ENCODE measurements at regions of chr20 and their contacts with region 1.

Region 1: DNA sequence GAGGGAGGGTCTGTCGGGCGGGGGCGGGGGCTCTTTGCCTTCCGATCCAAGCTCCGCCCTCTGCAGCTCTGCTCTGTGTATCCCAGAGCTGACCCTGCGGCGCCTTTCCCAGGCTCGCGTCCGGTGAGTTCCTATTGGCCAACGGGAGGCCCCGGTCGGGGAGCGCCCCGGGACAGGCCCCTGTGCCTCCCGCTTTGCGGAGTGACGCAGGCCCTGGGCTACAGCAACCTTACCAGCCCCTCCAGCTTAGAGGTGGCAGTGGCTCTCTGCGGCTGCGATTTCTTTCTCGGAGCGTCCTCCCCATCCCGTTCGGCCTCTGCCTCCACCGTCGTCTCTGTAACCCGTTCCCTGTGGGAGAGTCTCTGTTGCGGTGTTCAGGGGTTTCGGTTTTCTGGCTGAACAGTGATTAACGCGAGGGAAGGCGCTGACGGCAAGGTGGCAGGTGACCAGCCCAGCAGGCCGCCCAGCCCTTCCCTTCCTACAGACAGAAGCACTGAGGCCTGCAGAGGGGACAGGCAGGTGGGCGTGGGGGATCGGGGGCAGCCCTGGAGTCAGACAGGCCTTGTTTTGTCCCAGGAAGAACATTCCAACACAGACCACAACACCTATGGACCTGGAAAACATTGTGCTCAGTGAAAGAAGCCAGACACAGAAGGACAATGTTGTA is 18.1 kb upstream of the CEBPB start:
- DNase-seq: peak; percentile 62 to 96
- H3K4me3 ChIP-seq: peak overlapping the region; percentile 5
- CTCF ChIP-seq: no peak
- POLR2A ChIP-seq: no peak

Region 2: GRCh38 chr20:49979030-49979832 is 193.2 kb before region 1 on chr20:
- intact Hi-C with region 1: loop called (anchors 5 kb)
- DNase-seq: peak in 1 of 2 donors; percentile 91
- H3K4me3 ChIP-seq: no peak overlapping the region
- CTCF ChIP-seq: peak in 1 of 3 donors; percentile 92
- POLR2A ChIP-seq: no peak

Region 3: GRCh38 chr20:50120897-50121693 is 51.4 kb before region 1 on chr20:
- intact Hi-C with region 1: loop called (anchors 5 kb)
- DNase-seq: no peak
- H3K4me3 ChIP-seq: no peak overlapping the region
- CTCF ChIP-seq: peak in 1 of 3 donors; percentile 93
- POLR2A ChIP-seq: no peak

Measured in lower leg skin (tissue), 4 donors.